Natural killer cell (primary cell): ENCODE measurements at regions of chr1 and their contacts with region 1.

Region 1: DNA sequence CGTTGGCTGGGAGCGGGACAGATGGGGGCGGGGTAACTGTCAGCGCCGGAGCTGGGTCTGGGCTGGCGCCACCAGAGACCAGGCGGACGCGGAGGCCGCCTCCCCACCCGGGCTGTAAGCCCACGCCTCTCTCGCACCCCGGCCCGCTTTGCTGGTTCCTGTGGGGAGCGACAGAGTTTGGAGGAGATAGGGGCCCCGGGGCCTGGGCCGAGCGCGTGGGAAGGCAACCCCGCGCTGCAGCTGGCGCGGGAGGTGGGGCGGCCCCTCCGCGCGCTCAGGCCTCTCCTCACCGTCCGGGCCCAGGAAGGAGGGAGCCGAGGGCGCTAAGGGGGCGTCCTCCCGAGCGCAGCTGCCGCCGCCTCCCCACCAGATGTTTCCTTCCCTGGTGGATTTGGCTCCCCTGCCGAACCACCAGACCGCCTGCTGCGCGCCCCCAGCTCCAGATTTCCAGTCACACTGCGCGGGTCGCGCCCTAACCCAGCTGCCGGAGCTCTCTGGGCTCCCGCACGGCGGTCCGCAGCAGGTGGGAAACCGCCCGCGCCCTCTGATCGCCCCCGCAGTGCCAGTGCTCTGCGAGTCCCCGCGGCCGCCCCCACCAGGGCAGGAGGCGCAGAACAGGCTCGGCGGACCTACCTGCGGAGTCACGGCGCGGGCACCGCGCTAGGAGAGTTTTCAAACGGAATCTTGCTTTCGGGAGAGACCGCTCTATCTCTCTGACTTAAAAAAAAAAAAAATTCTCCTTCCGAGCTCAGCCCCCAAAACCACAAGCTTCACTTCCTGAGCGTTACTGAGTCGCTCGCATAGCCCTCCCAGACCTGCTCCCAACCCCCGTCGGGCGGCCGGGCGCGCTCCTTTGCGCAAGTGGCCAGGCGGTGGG is 1.1 kb downstream of the GFI1 start:
- DNase-seq: peak; percentile 73 to 88
- ATAC-seq: peak; percentile 52 to 73 (median 70)
- H3K4me3 ChIP-seq: peak overlapping the region; percentile 65
- H3K4me3 Mint-ChIP-seq: peak overlapping the region; percentile 98
- H3K27ac ChIP-seq: peak overlapping the region; percentile 71
- H3K27ac Mint-ChIP-seq: peak overlapping the region; percentile 88 to 94
- H3K4me1 ChIP-seq: peaks cover 39% of the 10 kb centered on the region
- H3K4me1 Mint-ChIP-seq: peaks cover 26 to 47% of the 10 kb centered on the region in 2 donors
- H3K27me3 ChIP-seq: no peaks in the 10 kb centered on the region
- H3K27me3 Mint-ChIP-seq: no peaks in the 10 kb centered on the region
- CTCF ChIP-seq: peak; percentile 60

Region 2: DNA sequence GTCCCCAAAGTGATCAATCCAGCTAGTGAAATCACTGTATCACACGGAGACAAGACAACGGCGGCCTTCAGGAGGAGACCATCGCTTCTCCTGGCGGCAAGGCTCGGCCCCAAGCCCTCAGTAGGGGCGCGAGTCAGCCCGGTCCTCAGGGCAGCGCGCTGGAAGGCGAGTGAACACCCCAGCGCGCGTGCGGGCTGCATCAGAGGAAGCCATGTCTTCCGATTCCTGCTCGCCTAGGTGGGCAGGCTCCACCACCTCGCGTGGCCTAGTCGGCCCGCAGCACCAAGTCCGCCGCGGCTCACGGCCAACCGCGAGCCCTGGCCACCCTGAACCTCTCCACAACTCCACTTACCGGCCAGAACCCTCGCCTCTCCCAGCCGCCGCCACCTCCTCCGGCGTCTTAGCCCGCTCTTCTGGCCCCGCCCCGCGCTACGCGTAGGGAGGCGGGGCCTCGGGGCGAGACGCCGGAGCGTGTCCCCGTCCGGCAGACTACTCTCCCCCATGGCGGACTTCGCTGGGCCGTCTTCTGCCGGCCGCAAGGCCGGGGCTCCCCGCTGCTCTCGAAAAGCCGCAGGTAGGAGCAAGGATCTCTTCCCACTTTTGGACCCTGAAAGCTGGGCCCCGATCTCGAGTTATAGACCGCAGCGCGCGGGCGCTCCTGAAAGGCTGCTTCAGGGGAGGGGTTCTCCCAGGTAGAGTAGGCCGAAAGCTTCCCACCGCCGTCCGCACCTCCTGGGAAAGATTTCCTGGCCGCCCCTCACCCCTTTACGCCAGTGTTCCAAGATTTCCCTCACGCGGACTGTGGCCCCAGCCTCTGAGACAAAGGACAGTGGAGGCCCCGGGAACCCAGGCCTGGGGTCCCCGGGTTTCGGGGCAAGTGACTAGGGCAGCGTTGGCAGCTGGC is 186.8 kb before region 1 on chr1 and contains the starts of genes GLMN and RPAP2:
- intact Hi-C with region 1: loop called (anchors 5 kb)
- DNase-seq: peak; percentile 77 to 88
- ATAC-seq: peak; percentile 94 to 98 (median 96)
- H3K4me3 ChIP-seq: peak within 1 kb of the TSS; percentile 83
- H3K4me3 Mint-ChIP-seq: peak within 1 kb of the TSS; percentile 96
- H3K27ac ChIP-seq: peak within 1 kb of the TSS; percentile 91
- H3K27ac Mint-ChIP-seq: peak within 1 kb of the TSS; percentile 95 to 99
- H3K4me1 ChIP-seq: peaks cover 9% of the 10 kb centered on the region
- H3K4me1 Mint-ChIP-seq: peaks cover 31 to 37% of the 10 kb centered on the region in 2 donors
- H3K27me3 ChIP-seq: no peaks in the 10 kb centered on the region
- H3K27me3 Mint-ChIP-seq: no peaks in the 10 kb centered on the region
- CTCF ChIP-seq: no peak
- total RNA-seq, gene GLMN: 19.8 to 25.9 (median 19.9) TPM
- total RNA-seq, gene RPAP2: 39.4 to 45.7 (median 39.8) TPM

Region 3: DNA sequence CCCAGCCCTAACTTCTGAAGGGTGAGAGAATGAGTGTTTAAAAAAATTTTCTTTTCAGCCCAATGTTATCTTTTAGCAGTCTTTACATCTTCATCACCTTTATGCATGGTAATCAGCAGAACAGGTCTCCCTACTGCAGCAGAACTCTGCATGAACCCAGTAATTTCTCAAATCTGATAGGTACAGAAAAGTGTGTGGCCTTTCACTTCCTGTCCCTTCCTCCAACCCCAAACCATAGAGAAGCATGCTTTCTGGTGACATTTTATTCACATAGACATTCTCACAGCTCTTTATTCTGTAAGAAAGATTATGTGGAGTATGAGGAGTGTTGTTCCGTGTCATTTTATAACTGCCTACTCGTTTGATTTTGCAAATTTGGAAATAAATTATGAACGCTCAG is 118.1 kb before region 1 on chr1:
- intact Hi-C with region 1: loop called (anchors 5 kb)
- DNase-seq: peak in 1 of 2 donors; percentile 21
- ATAC-seq: peak; percentile 44 to 52 (median 48)
- H3K4me3 ChIP-seq: no peak overlapping the region
- H3K4me3 Mint-ChIP-seq: peak overlapping the region; percentile 21
- H3K27ac ChIP-seq: no peak overlapping the region
- H3K27ac Mint-ChIP-seq: peak overlapping the region; percentile 46 to 74
- H3K4me1 ChIP-seq: peaks cover 11% of the 10 kb centered on the region
- H3K4me1 Mint-ChIP-seq: peaks cover 40 to 41% of the 10 kb centered on the region in 2 donors
- H3K27me3 ChIP-seq: no peaks in the 10 kb centered on the region
- H3K27me3 Mint-ChIP-seq: no peaks in the 10 kb centered on the region
- CTCF ChIP-seq: no peak

Region 4: DNA sequence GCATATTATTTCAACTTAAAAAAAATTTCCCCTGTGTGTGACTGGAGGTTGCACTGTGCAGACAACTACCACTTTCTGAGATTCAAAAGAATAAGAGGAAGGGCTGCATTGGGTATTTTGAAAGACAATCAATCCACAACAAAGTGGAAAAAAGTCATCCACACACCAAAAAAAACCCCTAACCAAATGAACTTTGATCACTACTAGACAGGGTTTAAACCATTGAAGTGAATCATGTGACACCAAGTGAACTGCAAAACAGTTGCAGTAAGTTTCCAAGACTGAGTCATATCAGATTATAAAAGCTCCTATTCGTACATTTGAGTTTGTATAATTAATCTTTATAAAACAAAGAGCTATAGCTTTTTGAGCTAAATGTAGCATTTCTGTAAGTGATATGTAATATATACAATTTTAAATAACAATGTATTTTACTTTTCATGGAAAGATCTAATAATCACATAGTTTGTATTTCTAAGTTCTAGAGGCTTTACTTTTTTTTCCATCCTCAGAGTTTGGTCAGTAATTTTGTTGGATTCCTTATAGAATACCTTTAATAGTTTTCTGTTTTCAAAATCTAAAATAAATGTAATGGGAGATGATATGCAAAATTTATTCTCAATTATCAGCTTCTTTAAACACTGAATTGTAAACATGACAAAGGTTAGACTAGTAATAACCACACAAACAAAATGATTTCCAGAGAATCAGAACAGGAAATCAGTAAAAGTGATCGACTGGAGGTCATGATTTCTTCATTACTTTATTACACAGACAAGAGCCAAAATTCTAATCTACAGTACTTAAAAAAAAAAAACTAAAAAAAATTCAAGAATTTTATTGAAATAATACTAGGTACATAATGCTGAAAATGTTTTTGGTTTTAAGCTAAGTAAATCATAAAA is 51.6 kb after region 1 on chr1:
- intact Hi-C with region 1: loop called (anchors 1 kb)
- DNase-seq: peak in 1 of 2 donors; percentile 83
- ATAC-seq: peak; percentile 57 to 66 (median 63)
- H3K4me3 ChIP-seq: peak overlapping the region; percentile 19
- H3K4me3 Mint-ChIP-seq: peak overlapping the region; percentile 68
- H3K27ac ChIP-seq: peak overlapping the region; percentile 87
- H3K27ac Mint-ChIP-seq: peak overlapping the region; percentile 91 to 92
- H3K4me1 ChIP-seq: peaks cover 11% of the 10 kb centered on the region
- H3K4me1 Mint-ChIP-seq: peaks cover 24 to 26% of the 10 kb centered on the region in 2 donors
- H3K27me3 ChIP-seq: no peaks in the 10 kb centered on the region
- H3K27me3 Mint-ChIP-seq: no peaks in the 10 kb centered on the region
- CTCF ChIP-seq: no peak

Region 5: GRCh38 chr1:92583821-92584760 is 98.5 kb after region 1 on chr1:
- intact Hi-C with region 1: loop called (anchors 2 kb)
- DNase-seq: peak in 1 of 2 donors; percentile 70
- ATAC-seq: peak; percentile 85 to 96 (median 89)
- H3K4me3 ChIP-seq: peak overlapping the region; percentile 10
- H3K4me3 Mint-ChIP-seq: peak overlapping the region; percentile 76
- H3K27ac ChIP-seq: peak overlapping the region; percentile 64
- H3K27ac Mint-ChIP-seq: peak overlapping the region; percentile 86 to 88
- H3K4me1 ChIP-seq: peaks cover 12% of the 10 kb centered on the region
- H3K4me1 Mint-ChIP-seq: peaks cover 20% of the 10 kb centered on the region in 2 donors
- H3K27me3 ChIP-seq: no peaks in the 10 kb centered on the region
- H3K27me3 Mint-ChIP-seq: no peaks in the 10 kb centered on the region
- CTCF ChIP-seq: no peak

Region 6: GRCh38 chr1:92599184-92599583 is 113.6 kb after region 1 on chr1:
- intact Hi-C with region 1: loop called (anchors 5 kb)
- DNase-seq: peak in 1 of 2 donors; percentile 70
- ATAC-seq: peak in 2 of 3 donors; percentile 66 to 69
- H3K4me3 ChIP-seq: no peak overlapping the region
- H3K4me3 Mint-ChIP-seq: no peak overlapping the region
- H3K27ac ChIP-seq: no peak overlapping the region
- H3K27ac Mint-ChIP-seq: peak overlapping the region in 1 of 2 donors; percentile 42
- H3K4me1 ChIP-seq: no peaks in the 10 kb centered on the region
- H3K4me1 Mint-ChIP-seq: no peaks in the 10 kb centered on the region
- H3K27me3 ChIP-seq: no peaks in the 10 kb centered on the region
- H3K27me3 Mint-ChIP-seq: no peaks in the 10 kb centered on the region
- CTCF ChIP-seq: peak; percentile 65

Region 7: GRCh38 chr1:93207211-93207610 is 721.6 kb after region 1 on chr1:
- intact Hi-C with region 1: no loop called
- DNase-seq: no peak
- ATAC-seq: no peak
- H3K4me3 ChIP-seq: no peak overlapping the region
- H3K4me3 Mint-ChIP-seq: no peak overlapping the region
- H3K27ac ChIP-seq: no peak overlapping the region
- H3K27ac Mint-ChIP-seq: no peak overlapping the region
- H3K4me1 ChIP-seq: no peaks in the 10 kb centered on the region
- H3K4me1 Mint-ChIP-seq: no peaks in the 10 kb centered on the region
- H3K27me3 ChIP-seq: no peaks in the 10 kb centered on the region
- H3K27me3 Mint-ChIP-seq: no peaks in the 10 kb centered on the region
- CTCF ChIP-seq: no peak